KBM-7 (cell line): ENCODE measurements at regions of chr3 and their contacts with region 1.

Region 1: DNA sequence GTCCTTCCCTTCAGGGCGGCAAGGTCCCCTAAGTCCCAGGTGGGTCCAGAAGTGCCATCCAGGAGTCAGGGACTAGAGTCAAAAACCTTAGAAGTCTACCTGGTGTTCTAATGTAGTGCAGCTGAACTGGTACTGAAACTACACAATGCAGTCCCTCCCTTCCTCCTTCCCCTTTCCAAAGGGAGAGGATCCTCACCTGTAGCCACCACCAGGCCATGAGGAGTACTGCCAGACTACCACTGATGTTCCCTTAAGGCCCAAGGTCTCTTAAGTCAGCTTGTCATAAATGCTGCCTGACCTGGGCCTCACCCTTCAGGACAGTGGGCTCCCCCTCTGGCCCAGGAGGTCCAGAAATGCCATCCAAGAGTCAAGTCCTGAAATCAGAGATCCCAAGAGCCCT is 98.9 kb downstream of the ULK4 start:
- DNase-seq: no peak

Region 2: DNA sequence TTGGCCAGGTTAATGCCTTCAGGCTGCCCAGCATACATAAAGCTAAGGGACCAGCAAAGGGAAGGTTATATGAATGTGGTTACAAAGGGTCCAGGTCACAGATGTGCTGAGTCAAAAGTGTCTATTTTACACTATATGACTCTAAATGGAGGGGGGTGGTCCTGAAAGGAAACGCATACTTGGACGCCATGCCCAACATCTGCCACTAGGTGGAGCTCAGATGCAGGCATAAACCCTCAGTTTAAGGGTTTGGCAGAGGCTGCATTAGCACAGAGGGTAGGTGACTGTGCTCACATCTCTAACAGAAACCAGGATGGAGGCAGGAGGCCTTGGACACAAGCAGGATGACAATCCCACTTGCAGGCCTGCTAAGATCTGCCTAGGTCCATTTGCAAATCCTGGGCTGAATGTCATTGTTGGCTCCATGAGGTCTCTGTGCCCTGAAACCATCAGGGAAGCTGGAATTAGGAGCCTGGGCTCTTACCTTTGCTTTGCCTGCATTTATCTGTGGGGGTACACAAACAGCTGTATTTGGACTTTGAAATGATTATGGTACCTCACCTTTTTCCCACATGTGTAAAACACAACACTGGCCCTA is 1282.4 kb before region 1 on chr3:
- in situ Hi-C with region 1: loop called (anchors 25 kb)
- DNase-seq: peak; percentile 69